CD8-positive, alpha-beta T cell (primary cell): ENCODE measurements at regions of chr2 and their contacts with region 1.

Region 1: DNA sequence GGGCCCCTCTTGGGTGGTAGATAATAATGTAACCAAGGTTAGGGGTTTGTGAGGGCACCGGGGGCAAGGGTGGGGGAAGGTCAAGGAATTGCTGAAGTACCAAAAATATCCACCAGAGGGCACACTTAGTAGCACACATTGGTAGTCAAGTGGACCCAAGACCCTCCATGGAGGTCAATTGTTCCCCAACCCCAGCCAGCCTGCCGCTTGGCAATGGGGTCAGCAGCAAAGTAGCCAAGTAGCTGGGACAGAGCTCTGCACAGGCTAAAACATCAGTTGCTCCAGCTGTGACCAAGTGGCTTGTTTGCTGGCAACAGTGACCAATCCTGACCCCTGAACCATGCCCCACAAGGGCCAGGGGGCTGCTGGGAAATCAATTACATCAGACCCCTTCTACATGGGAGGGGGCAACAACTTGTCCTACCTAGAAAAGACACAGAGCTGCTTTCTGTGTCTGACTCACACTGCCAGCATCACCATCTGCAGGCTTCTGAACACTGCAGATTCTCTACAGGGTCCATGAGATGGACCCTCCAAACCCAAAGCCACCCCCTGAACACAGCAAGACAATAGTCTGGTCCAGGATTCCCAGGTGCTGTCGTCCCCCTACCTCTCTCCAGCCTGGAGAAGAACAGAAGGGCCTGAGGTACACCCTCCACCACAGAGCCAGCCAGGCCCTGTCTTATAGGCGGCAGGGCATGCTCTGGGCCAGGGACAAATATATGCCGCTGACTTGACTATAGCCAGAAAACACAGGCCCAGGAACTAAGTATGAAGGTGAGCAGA is 76.0 kb downstream of the EMX1 start:
- DNase-seq: peak in 8 of 9 experiments; percentile 7 to 72 (median 54)
- ATAC-seq: peak; percentile 46
- H3K4me3 ChIP-seq: no peak overlapping the region
- H3K4me3 Mint-ChIP-seq: no peak overlapping the region
- H3K27ac ChIP-seq: no peak overlapping the region
- H3K27ac Mint-ChIP-seq: no peak overlapping the region
- H3K4me1 ChIP-seq: no peaks in the 10 kb centered on the region
- H3K4me1 Mint-ChIP-seq: no peaks in the 10 kb centered on the region
- H3K27me3 ChIP-seq: no peaks in the 10 kb centered on the region
- H3K27me3 Mint-ChIP-seq: no peaks in the 10 kb centered on the region
- CTCF ChIP-seq: peak; percentile 83

Region 2: DNA sequence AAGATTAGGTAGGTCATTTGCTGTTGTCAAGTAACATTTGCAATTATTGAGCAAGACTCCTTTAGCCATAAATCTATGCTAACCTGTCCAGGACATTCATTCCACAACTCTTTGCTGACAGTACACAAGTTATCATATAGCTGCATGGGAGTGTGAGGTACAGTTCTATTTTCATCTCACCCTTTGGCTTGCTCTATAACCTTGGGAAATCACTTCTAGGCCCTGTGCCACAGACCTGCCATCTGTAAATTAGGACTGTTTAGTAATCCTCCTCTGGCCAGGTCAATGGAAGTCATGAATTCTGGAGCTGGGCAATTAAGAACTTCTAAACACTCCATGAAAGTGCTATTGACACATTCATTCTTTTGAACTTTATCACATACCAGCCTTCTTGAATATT is 1731.8 kb before region 1 on chr2:
- CTCF ChIA-PET with region 1: no interaction called
- POLR2A ChIA-PET with region 1: no interaction called
- intact Hi-C with region 1: no loop called
- DNase-seq: no peak
- ATAC-seq: no peak
- H3K4me3 ChIP-seq: no peak overlapping the region
- H3K4me3 Mint-ChIP-seq: no peak overlapping the region
- H3K27ac ChIP-seq: no peak overlapping the region
- H3K27ac Mint-ChIP-seq: no peak overlapping the region
- H3K4me1 ChIP-seq: no peaks in the 10 kb centered on the region
- H3K4me1 Mint-ChIP-seq: no peaks in the 10 kb centered on the region
- H3K27me3 ChIP-seq: no peaks in the 10 kb centered on the region
- H3K27me3 Mint-ChIP-seq: peaks cover 9% of the 10 kb centered on the region
- CTCF ChIP-seq: no peak

Region 3: GRCh38 chr2:73156539-73157124 is 163.3 kb after region 1 on chr2:
- CTCF ChIA-PET with region 1: interaction called, 14 read pairs
- POLR2A ChIA-PET with region 1: no interaction called
- intact Hi-C with region 1: no loop called
- DNase-seq: peak in 6 of 9 experiments; percentile 12 to 58 (median 46)
- ATAC-seq: no peak
- H3K4me3 ChIP-seq: no peak overlapping the region
- H3K4me3 Mint-ChIP-seq: no peak overlapping the region
- H3K27ac ChIP-seq: no peak overlapping the region
- H3K27ac Mint-ChIP-seq: no peak overlapping the region
- H3K4me1 ChIP-seq: no peaks in the 10 kb centered on the region
- H3K4me1 Mint-ChIP-seq: no peaks in the 10 kb centered on the region
- H3K27me3 ChIP-seq: peaks cover 0 to 10% of the 10 kb centered on the region in 2 experiments
- H3K27me3 Mint-ChIP-seq: peaks cover 49% of the 10 kb centered on the region
- CTCF ChIP-seq: no peak

Region 4: DNA sequence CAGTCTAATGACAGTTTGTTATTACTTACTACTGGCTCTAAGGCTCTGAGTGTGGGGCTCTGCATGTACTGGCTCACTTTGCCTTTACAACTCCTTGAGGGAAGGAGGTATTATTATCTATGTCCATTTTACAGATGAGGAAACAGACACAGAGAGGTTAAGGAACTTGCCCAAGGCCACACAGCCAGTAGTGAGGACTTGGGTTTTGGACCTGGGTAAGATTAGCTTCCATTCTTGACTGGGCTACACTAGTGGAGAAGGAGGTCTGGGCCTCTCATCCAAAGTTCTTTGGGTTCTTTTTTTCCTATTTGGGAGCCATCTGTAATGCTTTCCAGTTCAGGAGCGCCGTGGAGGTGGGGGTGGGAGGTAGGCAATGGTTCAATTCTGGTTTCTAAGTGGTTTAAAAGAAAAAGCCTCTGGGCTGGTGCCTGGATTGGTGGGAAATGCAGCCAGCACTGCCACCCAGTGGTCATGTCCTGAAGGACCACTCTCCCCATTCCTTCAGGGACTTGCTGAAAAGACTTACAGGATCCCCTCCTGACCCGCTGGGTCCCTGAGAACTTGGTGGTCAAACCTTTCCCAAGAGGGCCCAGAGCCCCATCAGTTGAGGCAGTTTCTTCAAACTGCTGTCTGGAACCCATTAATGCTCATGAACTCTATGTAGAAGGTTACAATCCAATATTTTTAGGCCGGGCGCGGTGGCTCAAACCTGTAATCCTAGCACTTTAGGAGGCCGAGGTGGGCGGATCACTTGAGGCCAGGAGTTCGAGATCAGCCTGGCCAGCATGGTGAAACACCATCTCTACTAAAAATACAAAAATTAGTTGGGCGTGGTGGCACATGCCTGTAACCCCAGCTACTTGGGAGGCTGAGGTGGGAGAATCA is 170.4 kb after region 1 on chr2:
- CTCF ChIA-PET with region 1: interaction called, 7 read pairs
- POLR2A ChIA-PET with region 1: no interaction called
- intact Hi-C with region 1: loop called in 1 of 2 experiments (anchors 1 kb)
- DNase-seq: peak; percentile 31 to 77 (median 66)
- ATAC-seq: peak; percentile 86
- H3K4me3 ChIP-seq: no peak overlapping the region
- H3K4me3 Mint-ChIP-seq: no peak overlapping the region
- H3K27ac ChIP-seq: no peak overlapping the region
- H3K27ac Mint-ChIP-seq: no peak overlapping the region
- H3K4me1 ChIP-seq: no peaks in the 10 kb centered on the region
- H3K4me1 Mint-ChIP-seq: no peaks in the 10 kb centered on the region
- H3K27me3 ChIP-seq: no peaks in the 10 kb centered on the region
- H3K27me3 Mint-ChIP-seq: peaks cover 20% of the 10 kb centered on the region
- CTCF ChIP-seq: peak; percentile 78

Region 5: DNA sequence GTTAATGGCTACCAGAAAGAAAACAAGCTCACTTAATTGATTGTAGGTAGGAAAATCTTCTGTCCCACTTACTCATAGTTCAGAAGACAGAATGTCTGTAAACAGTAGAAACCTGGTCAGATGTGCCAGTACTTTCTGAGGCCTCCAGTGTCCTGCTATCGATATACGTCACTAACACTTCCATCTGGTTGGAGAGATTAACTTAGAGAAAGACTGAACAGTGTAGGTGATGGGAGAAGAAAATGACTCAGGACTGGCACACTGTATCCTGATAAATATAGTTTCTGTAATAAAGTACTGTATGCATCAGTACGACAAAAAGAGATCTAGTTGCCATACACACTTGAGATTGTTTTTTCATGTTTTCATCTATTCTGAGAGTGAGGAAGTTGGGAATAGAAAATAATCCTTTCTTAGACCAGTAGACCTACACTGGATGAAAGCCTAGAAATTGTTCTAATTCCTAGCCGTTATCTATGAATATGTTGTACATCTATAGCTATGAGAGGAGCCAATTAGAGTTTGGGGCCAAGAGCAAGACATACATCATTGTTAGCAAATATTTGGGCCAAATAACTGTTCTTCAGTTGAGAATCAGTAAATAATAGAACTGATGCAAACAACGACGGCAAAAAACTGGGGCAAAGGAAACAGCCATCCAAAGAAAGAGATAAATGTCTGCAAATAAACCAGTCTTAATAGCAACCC is 542.9 kb after region 1 on chr2:
- CTCF ChIA-PET with region 1: no interaction called
- POLR2A ChIA-PET with region 1: no interaction called
- intact Hi-C with region 1: no loop called
- DNase-seq: no peak
- ATAC-seq: no peak
- H3K4me3 ChIP-seq: no peak overlapping the region
- H3K4me3 Mint-ChIP-seq: no peak overlapping the region
- H3K27ac ChIP-seq: no peak overlapping the region
- H3K27ac Mint-ChIP-seq: no peak overlapping the region
- H3K4me1 ChIP-seq: no peaks in the 10 kb centered on the region
- H3K4me1 Mint-ChIP-seq: no peaks in the 10 kb centered on the region
- H3K27me3 ChIP-seq: no peaks in the 10 kb centered on the region
- H3K27me3 Mint-ChIP-seq: no peaks in the 10 kb centered on the region
- CTCF ChIP-seq: no peak